Calu3 (cell line): ENCODE measurements at regions of chr3 and their contacts with region 1.

Region 1: GRCh38 chr3:151770956-151771355 is 37.2 kb downstream of the AADACL2 start:
- DNase-seq: peak; percentile 67
- H3K4me3 Mint-ChIP-seq: no peak overlapping the region
- H3K27ac Mint-ChIP-seq: peak overlapping the region; percentile 84
- H3K4me1 Mint-ChIP-seq: peaks cover 74% of the 10 kb centered on the region
- H3K27me3 Mint-ChIP-seq: no peaks in the 10 kb centered on the region
- CTCF ChIP-seq: no peak

Region 2: GRCh38 chr3:151795276-151795675 is 24.3 kb after region 1 on chr3:
- CTCF ChIA-PET with region 1: interaction called, 7 read pairs
- intact Hi-C with region 1: loop called (anchors 2 kb)
- DNase-seq: no peak
- H3K4me3 Mint-ChIP-seq: no peak overlapping the region
- H3K27ac Mint-ChIP-seq: no peak overlapping the region
- H3K4me1 Mint-ChIP-seq: peaks cover 30% of the 10 kb centered on the region
- H3K27me3 Mint-ChIP-seq: no peaks in the 10 kb centered on the region
- CTCF ChIP-seq: no peak

Region 3: GRCh38 chr3:151925876-151926275 is 154.9 kb after region 1 on chr3:
- CTCF ChIA-PET with region 1: no interaction called
- intact Hi-C with region 1: no loop called
- DNase-seq: peak; percentile 8
- H3K4me3 Mint-ChIP-seq: no peak overlapping the region
- H3K27ac Mint-ChIP-seq: no peak overlapping the region
- H3K4me1 Mint-ChIP-seq: peaks cover 25% of the 10 kb centered on the region
- H3K27me3 Mint-ChIP-seq: no peaks in the 10 kb centered on the region
- CTCF ChIP-seq: no peak